Activated CD4-positive, alpha-beta T cell treated with anti-CD3 and anti-CD28 coated beads, Interleukin-2, amount 10 ng/mL, durations not matched to agents 24 days and 14 days (primary cell): ENCODE measurements at regions of chr6 and their contacts with region 1.

Region 1: DNA sequence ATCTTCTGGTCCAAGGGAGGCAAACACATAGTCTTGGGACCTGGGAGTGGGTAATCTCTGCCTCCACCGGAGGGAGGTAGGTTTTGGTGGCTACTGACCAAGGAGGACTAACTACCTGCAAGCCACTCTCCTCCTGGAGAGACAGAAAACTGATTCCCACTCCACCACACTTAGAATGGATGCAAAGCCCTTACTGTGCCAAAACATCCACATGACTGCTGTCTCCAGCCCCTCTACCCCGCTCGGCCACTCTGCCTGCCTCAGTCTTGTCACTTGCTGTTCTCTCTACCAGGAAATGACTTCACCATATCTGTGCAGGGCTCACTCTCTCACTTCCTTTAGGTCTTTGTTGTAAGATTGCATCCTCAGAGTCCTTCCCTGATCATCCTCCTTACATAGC is 129.5 kb upstream of the ARG1 start:
- DNase-seq: peak; percentile 83
- H3K4me3 Mint-ChIP-seq: peak overlapping the region; percentile 86
- H3K27ac Mint-ChIP-seq: peak overlapping the region; percentile 94
- H3K4me1 Mint-ChIP-seq: peaks cover 44% of the 10 kb centered on the region
- H3K27me3 Mint-ChIP-seq: no peaks in the 10 kb centered on the region

Region 2: DNA sequence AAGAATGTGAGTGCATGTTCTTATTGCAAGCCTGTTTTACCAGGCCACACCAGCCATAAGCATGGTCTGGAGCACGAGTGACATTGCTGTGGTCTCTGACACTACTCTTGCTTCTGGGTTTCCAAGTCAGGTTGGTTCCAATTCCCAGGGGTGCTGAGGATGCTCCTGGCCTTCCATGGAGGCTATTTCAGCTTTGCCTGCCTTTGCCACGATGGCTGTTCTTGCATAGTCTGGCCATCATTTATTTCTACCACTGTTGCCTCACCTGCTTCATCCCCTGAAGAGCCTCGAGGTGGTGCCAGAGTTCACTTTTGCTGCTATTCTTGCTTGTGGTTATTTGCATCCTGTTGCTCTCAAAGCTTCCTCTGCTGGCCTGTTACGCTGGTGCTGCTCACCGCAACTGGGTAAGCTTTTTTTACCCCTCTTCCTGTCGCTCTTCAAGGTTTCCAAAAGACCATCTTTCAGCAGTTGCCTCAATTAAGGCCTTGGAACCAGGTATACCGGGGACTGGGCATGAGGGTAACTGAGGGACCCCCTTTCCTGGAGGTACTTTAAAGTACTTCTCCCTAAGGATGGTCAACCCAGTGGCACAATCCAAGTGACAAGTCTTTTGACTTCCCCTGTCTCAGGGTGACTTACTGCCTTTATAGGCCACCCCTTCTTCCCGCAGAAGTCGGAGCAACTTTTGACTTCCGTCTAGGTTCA is 243.8 kb before region 1 on chr6:
- intact Hi-C with region 1: loop called (anchors 2 kb)
- DNase-seq: peak; percentile 93
- H3K4me3 Mint-ChIP-seq: peak overlapping the region; percentile 81
- H3K27ac Mint-ChIP-seq: peak overlapping the region; percentile 95
- H3K4me1 Mint-ChIP-seq: peaks cover 45% of the 10 kb centered on the region
- H3K27me3 Mint-ChIP-seq: no peaks in the 10 kb centered on the region

Region 3: GRCh38 chr6:131427434-131428058 is 16.0 kb before region 1 on chr6:
- intact Hi-C with region 1: loop called (anchors 2 kb)
- DNase-seq: no peak
- H3K4me3 Mint-ChIP-seq: no peak overlapping the region
- H3K27ac Mint-ChIP-seq: no peak overlapping the region
- H3K4me1 Mint-ChIP-seq: peaks cover 17% of the 10 kb centered on the region
- H3K27me3 Mint-ChIP-seq: no peaks in the 10 kb centered on the region

Region 4: DNA sequence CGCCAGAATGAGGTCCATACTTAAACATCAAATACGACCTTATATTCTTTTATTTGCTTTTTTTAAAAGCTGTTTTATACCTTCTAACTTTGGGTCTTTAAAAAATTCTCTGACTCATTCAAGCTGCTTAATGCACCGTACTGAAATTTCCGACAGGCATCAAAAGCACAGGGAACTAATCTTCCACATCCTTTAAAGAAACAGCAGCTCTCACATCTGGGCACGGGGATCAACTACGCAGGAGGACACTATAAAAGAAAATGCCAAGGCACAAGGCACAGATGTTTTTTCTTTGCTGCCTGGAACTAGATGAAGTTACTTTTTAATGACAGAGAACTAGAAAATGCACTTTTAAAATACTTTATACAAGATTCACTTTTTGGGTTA is 17.1 kb after region 1 on chr6:
- intact Hi-C with region 1: no loop called
- DNase-seq: no peak
- H3K4me3 Mint-ChIP-seq: no peak overlapping the region
- H3K27ac Mint-ChIP-seq: no peak overlapping the region
- H3K4me1 Mint-ChIP-seq: peaks cover 5% of the 10 kb centered on the region
- H3K27me3 Mint-ChIP-seq: no peaks in the 10 kb centered on the region